OCI-LY7 (cell line): ENCODE measurements at regions of chr21 and their contacts with region 1.

Region 1: DNA sequence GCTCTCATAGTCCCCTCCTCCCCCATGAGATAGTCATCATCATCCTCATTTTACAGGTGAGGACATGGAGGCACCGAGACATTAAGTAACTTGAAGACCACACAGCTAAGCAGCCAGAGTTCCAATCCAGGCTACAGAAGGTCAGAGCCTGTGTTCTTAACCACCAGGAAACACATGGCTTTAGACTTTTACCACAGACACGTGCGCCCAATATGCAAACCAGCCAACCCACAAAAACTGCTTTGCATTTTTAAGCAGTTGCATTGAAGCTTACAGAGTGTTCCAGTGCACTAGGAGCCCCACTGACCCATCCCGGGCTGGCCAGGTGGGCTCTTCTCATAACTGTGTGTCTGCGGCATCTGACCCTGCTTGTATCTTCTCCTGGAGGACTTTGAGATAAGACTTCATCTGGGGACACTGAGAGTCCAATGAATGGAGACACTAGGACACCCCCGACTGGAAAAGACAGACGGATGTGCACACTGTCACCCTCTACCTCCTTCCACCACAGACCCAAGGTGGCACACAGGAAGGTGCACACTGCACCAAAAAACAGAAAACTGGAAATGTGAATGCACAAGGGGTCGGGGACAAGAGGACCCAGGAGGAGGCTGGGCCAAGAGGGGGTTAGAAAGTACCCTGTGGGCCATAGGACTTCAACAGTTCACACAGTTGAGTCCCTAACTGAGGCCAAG is 56.4 kb downstream of the ETS2 start:
- DNase-seq: peak; percentile 91
- H3K4me3 ChIP-seq: peak overlapping the region; percentile 24
- H3K27ac ChIP-seq: peak overlapping the region; percentile 78
- H3K4me1 ChIP-seq: peaks cover 44% of the 10 kb centered on the region
- CTCF ChIP-seq: no peak

Region 2: GRCh38 chr21:38787461-38788274 is 74.5 kb before region 1 on chr21:
- CTCF ChIA-PET with region 1: no interaction called
- POLR2A ChIA-PET with region 1: no interaction called
- intact Hi-C with region 1: no loop called
- DNase-seq: no peak
- H3K4me3 ChIP-seq: no peak overlapping the region
- H3K27ac ChIP-seq: no peak overlapping the region
- H3K4me1 ChIP-seq: peaks cover 25% of the 10 kb centered on the region
- CTCF ChIP-seq: no peak

Region 3: DNA sequence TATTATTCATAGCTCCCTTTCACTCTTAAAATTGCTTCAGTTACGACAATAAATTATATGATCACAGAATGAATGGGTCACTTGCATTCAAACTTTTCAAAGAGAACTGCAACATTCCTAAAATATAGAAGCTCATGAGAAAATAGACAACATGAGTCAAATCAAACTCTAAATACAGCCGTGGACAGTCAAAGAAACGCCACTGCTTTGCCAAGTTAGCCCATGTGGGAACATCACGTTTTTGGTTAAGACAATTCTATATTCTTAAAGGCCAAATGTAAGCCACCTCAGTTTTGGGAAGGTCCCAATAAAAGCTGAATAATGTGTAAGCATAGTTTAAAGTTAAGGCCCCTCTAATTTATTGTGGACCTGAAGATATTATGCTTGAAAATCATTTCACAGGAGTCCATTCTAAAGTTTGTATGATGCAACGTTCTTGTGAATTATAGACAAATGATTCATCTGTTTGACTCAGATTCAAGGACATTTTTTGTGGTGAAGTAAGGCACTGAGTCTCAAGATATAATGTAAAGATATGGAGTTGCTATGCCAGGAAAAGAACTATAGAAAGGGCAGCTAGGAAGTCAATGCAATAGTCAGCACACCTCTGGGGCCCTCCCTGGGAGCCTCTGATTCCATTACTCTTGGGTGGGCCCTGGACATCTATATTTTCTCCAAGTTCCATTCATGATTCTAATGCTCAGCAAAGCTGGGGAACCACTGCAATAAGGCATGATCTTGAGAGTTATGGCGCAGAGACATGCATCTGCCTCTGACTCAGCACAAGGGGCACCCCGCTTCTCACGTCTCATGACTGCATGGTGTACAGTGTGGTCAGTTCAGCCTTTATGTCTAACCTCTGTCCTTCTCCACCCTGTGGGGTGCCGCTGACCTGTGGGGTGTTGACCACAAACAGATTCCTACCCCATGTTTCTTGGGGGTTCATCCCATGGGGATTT is 22.5 kb before region 1 on chr21:
- CTCF ChIA-PET with region 1: no interaction called
- POLR2A ChIA-PET with region 1: no interaction called
- intact Hi-C with region 1: no loop called
- DNase-seq: no peak
- H3K4me3 ChIP-seq: no peak overlapping the region
- H3K27ac ChIP-seq: no peak overlapping the region
- H3K4me1 ChIP-seq: no peaks in the 10 kb centered on the region
- CTCF ChIP-seq: no peak

Region 4: DNA sequence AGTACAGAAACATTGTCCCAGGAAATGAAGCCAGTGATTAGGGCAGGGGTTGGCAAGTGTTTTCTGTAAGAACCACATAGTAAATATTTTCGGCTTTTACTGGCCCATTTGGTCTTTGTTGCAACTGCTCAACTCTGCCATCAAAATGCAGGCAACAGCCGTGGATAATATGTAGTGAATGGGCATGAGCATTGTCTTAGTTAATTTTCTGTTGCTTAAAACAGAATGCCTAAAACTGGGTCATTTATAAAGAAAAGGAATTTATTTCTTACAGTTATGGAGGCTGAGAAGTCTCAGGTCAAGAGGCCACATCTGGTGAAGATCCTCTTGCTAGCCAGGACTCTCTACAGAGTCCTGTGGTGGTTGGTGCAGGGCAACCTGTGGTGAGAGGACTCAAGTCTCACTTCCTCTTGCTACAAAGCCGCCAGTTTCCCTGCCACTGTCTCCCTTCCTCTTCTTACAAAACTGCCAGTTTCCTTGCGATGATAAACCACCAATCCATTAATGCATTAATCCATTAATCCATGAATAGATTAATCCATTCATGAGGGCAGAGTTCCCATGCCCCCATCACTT is 154.7 kb after region 1 on chr21:
- CTCF ChIA-PET with region 1: no interaction called
- POLR2A ChIA-PET with region 1: no interaction called
- intact Hi-C with region 1: loop called (anchors 5 kb)
- DNase-seq: peak; percentile 85
- H3K4me3 ChIP-seq: no peak overlapping the region
- H3K27ac ChIP-seq: no peak overlapping the region
- H3K4me1 ChIP-seq: peaks cover 18% of the 10 kb centered on the region
- CTCF ChIP-seq: no peak